ENCODE measurements at regions of chr2 and their contacts with region 1.

Region 1: GRCh38 chr2:61176755-61177726 is 15.1 kb downstream of the C2orf74 start:
- DNase-seq: peak; percentile 95
- ATAC-seq: peak; percentile 90
- H3K4me3 Mint-ChIP-seq: peak overlapping the region; percentile 94
- H3K27ac Mint-ChIP-seq: peak overlapping the region; percentile 94
- H3K4me1 Mint-ChIP-seq: peaks cover 48% of the 10 kb centered on the region
- H3K27me3 Mint-ChIP-seq: no peaks in the 10 kb centered on the region
- CTCF ChIP-seq: no peak

Region 2: GRCh38 chr2:60400462-60401246 is 776.4 kb before region 1 on chr2:
- CTCF ChIA-PET with region 1: no interaction called
- POLR2A ChIA-PET with region 1: interaction called, 10 read pairs
- intact Hi-C with region 1: no loop called
- DNase-seq: no peak
- ATAC-seq: peak; percentile 81
- H3K4me3 Mint-ChIP-seq: peak overlapping the region; percentile 56
- H3K27ac Mint-ChIP-seq: peak overlapping the region; percentile 88
- H3K4me1 Mint-ChIP-seq: peaks cover 54% of the 10 kb centered on the region
- H3K27me3 Mint-ChIP-seq: no peaks in the 10 kb centered on the region
- CTCF ChIP-seq: no peak

Region 3: DNA sequence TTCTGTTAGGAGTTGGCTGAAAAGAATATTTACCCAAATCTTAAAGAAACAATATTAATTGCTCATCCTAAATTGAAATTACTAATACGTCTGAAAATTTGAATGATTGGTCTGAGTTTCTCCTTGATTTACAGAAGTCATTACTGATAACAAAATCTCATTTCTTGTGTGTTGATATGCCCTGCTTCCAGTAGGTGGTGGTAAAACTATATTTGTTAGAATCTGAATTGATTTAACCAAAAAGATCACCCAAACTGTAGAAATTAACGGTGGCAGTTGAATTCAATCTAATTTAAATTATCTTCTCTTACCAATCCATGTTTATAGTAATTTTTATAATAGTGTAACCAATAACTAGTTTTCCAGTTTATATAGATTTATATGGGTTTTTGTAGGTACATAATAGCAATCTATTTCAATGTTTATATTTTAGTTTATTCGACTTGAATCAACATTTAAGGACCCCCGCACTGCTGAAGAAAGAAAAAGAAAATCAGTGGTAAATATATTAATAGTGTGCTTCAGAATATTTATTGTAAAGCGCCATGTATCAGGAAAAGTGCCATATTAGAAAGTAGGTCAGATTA is 382.7 kb before region 1 on chr2:
- CTCF ChIA-PET with region 1: no interaction called
- POLR2A ChIA-PET with region 1: interaction called, 3 read pairs
- intact Hi-C with region 1: loop called (anchors 5 kb)
- DNase-seq: no peak
- ATAC-seq: peak; percentile 46
- H3K4me3 Mint-ChIP-seq: no peak overlapping the region
- H3K27ac Mint-ChIP-seq: no peak overlapping the region
- H3K4me1 Mint-ChIP-seq: peaks cover 31% of the 10 kb centered on the region
- H3K27me3 Mint-ChIP-seq: no peaks in the 10 kb centered on the region
- CTCF ChIP-seq: peak; percentile 46

Region 4: GRCh38 chr2:61065715-61066709 is 111.0 kb before region 1 on chr2 and contains the start of gene SANBR:
- CTCF ChIA-PET with region 1: no interaction called
- POLR2A ChIA-PET with region 1: interaction called, 15 read pairs
- intact Hi-C with region 1: loop called (anchors 1 kb)
- DNase-seq: peak; percentile 85
- ATAC-seq: peak; percentile 98
- H3K4me3 Mint-ChIP-seq: peak within 1 kb of the TSS; percentile 96
- H3K27ac Mint-ChIP-seq: peak within 1 kb of the TSS; percentile 82
- H3K4me1 Mint-ChIP-seq: peaks cover 11% of the 10 kb centered on the region
- H3K27me3 Mint-ChIP-seq: no peaks in the 10 kb centered on the region
- CTCF ChIP-seq: no peak
- total RNA-seq, gene SANBR: 2.0 and 2.2 TPM in 2 replicates

Region 5: GRCh38 chr2:61125123-61125710 is 51.8 kb before region 1 on chr2:
- CTCF ChIA-PET with region 1: no interaction called
- POLR2A ChIA-PET with region 1: no interaction called
- intact Hi-C with region 1: no loop called
- DNase-seq: no peak
- ATAC-seq: peak; percentile 28
- H3K4me3 Mint-ChIP-seq: no peak overlapping the region
- H3K27ac Mint-ChIP-seq: no peak overlapping the region
- H3K4me1 Mint-ChIP-seq: peaks cover 8% of the 10 kb centered on the region
- H3K27me3 Mint-ChIP-seq: no peaks in the 10 kb centered on the region
- CTCF ChIP-seq: no peak

Region 6: DNA sequence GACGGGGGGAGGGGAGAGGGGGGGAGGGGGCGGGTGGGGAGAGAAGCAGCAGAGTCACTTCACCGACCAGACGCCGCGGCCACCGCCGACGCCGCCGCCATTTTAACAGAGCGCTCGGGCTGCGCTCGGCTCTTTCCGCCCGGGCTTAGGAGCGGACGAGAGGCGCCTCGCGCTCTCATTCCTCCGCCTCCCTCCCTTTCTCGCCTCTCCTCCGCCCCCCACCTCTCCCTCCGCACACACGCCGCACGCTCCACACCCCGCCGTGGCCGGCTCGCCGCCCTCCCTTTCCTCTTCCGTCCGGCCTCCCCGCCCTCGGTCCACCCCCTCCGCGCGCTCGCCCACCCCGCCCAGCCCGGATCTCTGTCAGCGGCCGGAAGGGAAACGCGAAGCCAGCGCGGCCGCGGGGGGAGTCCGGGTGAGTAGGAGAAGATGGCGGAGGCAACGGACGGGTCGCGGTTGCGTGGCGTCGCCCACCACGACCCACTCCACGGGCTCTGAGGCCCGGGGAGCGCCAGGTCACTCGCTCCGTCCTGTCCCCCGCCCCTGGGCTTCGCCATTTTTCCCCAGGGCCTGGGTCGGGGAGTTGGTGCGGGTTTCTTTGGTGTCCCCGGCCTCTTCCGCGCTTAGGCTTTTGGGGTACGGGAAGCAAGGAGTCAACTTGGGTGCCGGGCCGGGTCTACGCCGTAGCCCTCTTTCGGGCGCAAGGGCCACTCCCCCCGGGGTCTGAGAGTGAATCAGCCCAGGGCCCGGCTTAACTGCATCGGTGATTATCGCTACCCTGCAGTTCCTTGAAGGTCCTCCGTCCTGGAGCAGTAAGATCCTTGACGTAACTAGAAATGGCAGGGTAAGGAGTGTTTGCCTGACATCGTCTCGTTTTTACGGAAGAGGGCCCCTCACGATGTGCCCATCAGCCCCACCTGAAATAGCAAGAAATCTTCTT is 294.2 kb after region 1 on chr2 and contains the start of gene USP34:
- CTCF ChIA-PET with region 1: no interaction called
- POLR2A ChIA-PET with region 1: interaction called, 5 read pairs
- intact Hi-C with region 1: loop called (anchors 1 kb)
- DNase-seq: peak; percentile 79
- ATAC-seq: peak; percentile 82
- H3K4me3 Mint-ChIP-seq: peak within 1 kb of the TSS; percentile 95
- H3K27ac Mint-ChIP-seq: peak within 1 kb of the TSS; percentile 95
- H3K4me1 Mint-ChIP-seq: peaks cover 38% of the 10 kb centered on the region
- H3K27me3 Mint-ChIP-seq: no peaks in the 10 kb centered on the region
- CTCF ChIP-seq: no peak
- total RNA-seq, gene USP34: 142 and 176 TPM in 2 replicates

Region 7: DNA sequence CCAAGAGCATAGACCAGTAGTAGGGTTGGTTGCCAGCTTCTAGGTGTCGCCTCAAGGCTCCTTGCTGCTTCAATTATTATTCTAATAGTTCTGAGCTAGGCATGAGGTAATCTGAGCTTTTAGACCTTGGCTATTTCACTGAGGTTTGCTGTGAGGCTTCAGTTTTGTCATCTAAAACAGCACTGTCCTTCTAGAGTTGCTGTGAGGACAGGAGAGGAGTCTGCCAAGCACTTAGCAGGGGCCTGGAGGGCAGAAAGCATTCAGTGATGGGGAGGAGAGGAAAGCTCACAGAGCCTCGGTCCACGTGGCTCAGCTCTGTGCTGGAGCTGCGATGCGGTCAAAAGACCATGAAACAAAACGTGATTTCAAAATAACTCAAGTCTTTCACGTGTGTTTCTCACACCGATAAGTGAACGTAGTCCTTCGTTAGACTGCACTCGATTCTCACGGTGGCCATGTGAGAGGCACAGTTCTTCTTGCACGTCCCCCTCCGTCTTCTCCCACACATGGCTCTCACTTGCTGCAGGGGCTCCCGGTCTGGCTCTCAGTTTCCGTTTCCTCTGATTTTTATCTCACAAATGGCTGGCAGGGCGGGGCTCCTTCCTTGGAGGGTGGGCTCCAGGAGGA is 1132.5 kb after region 1 on chr2:
- CTCF ChIA-PET with region 1: no interaction called
- POLR2A ChIA-PET with region 1: no interaction called
- intact Hi-C with region 1: no loop called
- DNase-seq: no peak
- ATAC-seq: no peak
- H3K4me3 Mint-ChIP-seq: peak overlapping the region; percentile 70
- H3K27ac Mint-ChIP-seq: peak overlapping the region; percentile 76
- H3K4me1 Mint-ChIP-seq: peaks cover 70% of the 10 kb centered on the region
- H3K27me3 Mint-ChIP-seq: no peaks in the 10 kb centered on the region
- CTCF ChIP-seq: no peak

Measured in activated B cell treated with CpG ODN at 0.5 μM for 24 hours (primary cell).